ENCODE measurements at regions of chr6 and their contacts with region 1.

Region 1: DNA sequence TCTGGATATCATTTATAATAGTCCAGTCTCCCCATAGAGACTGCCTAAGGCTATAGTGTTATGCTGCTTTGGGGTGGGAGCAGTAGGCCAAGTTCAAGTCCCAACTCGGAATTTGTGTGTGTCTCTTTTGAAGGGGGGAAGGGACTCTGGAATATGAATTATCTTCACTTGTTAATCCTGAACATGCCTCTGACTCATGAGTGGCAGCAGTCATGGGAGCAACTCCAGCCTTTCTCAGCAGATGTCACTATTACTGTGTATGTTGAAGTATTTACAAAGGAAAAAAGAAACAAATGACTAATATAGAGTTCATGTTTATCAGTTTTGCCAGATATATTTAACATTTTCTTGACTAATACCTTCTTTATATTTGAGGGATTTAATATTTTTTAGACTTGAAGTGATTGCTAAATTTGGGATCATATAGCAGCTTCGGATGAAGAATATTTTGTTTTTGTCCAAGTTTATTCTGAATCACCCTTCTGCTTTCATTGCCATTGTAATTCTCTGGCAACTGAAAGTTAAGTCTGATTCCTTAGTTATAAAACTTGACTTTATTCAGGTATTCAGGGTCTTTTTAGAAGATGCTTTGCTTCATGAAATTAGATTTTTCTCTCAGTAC is 23.4 kb downstream of the FAM217A start:
- DNase-seq: peak; percentile 26
- H3K4me3 Mint-ChIP-seq: no peak overlapping the region
- H3K27ac Mint-ChIP-seq: peak overlapping the region; percentile 54
- H3K4me1 Mint-ChIP-seq: peaks cover 34% of the 10 kb centered on the region
- H3K27me3 Mint-ChIP-seq: no peaks in the 10 kb centered on the region

Region 2: DNA sequence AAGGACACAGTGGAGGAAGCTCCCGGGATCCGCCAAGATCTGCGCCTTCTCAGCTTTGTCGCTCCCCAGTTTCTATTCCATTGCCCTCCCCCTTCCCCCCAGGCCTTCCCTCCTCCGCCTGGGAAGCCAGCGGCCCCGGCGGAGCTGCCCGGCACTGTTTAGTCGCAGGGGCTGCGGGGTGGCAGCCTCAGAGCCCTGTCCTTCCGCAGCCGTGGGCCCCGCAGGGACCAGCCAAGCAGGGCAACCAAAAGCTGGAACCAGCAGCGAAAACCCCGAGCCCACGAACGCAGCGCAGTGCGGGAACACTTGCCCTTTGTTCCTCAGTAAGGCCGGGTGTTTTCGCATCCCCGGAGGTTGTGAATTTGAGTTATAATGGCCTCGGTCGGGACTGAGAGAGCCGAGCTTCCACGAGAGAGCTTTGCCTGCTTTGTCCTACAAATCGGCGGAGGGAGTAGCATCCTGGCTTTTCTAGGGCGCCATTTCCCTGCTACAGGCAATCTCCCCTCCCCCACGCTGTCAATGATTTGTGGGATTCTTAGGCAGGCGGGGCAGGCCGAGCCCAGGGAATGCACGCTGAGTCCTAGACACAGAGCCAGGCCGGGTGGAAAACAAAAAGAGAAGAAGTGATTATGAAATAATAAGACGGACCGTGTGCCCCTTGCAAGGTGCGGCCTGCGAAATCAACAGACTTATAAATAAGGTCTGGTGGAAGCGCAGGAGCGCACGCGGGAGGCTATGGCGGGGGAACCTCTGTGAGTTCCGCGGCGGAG is 824.1 kb before region 1 on chr6:
- CTCF ChIA-PET with region 1: no interaction called
- POLR2A ChIA-PET with region 1: no interaction called
- DNase-seq: no peak
- H3K4me3 Mint-ChIP-seq: no peak overlapping the region
- H3K27ac Mint-ChIP-seq: no peak overlapping the region
- H3K4me1 Mint-ChIP-seq: peaks cover 43% of the 10 kb centered on the region
- H3K27me3 Mint-ChIP-seq: peaks cover 86% of the 10 kb centered on the region

Region 3: GRCh38 chr6:3707024-3707423 is 348.5 kb before region 1 on chr6:
- CTCF ChIA-PET with region 1: no interaction called
- POLR2A ChIA-PET with region 1: no interaction called
- DNase-seq: no peak
- H3K4me3 Mint-ChIP-seq: no peak overlapping the region
- H3K27ac Mint-ChIP-seq: no peak overlapping the region
- H3K4me1 Mint-ChIP-seq: no peaks in the 10 kb centered on the region
- H3K27me3 Mint-ChIP-seq: peaks cover 13% of the 10 kb centered on the region

Region 4: DNA sequence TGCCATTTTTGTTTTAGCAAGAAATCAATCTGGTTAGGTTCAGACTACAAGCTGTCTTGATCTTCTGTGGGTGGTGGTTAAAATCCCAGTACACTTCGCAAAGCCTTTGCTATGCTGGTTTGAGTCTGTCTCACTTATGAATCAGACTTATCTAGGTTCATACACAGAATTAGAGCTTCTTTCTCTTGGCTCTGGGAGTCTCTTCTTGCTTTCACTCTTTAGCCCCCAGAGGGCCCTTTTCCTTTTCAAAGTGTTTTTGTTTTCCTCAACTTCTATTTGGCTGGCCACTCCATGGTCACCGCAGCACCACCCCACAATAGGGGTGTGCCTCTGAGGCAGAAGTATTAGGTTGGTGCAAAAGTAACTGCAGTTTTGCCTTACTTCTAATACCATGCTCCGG is 58.6 kb after region 1 on chr6:
- CTCF ChIA-PET with region 1: no interaction called
- POLR2A ChIA-PET with region 1: no interaction called
- DNase-seq: no peak
- H3K4me3 Mint-ChIP-seq: no peak overlapping the region
- H3K27ac Mint-ChIP-seq: no peak overlapping the region
- H3K4me1 Mint-ChIP-seq: no peaks in the 10 kb centered on the region
- H3K27me3 Mint-ChIP-seq: peaks cover 16% of the 10 kb centered on the region

Region 5: DNA sequence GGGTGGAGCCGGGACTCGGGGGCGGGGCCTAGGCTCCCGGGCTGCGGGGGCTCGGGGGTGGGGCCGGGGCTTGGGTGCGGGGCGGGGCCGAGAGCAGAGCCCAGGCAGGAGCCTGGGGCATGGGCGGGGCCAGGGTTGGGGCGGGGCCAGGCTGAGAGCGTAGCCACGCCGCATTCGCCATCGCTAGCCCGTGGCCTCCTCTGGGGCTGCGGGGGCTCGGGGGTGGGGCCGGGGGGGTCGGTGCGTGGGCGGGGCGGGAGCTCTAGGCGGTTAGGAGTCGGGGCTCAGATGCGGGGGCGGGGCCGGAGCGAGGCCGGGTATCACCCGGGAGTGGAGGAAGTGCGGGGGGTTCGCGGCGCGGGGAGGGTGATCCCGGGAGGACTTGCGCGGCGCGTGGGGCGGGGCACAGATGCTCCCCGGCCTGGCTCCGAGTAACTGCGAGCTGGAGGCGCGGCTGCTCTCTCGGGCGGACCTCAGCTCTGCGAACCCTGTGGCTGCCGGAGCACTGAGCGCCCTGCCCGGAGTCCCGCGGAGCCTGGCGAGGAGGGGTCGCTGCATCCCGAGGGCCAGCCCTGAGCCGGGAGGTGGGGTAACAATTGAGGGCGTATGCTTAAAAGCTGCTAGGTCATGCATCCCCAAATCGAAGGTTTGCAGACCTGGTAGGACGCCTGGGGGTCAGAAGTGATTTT is 80.3 kb after region 1 on chr6:
- CTCF ChIA-PET with region 1: interaction called, 20 read pairs
- POLR2A ChIA-PET with region 1: interaction called, 6 read pairs
- DNase-seq: peak; percentile 95
- H3K4me3 Mint-ChIP-seq: peak overlapping the region; percentile 78
- H3K27ac Mint-ChIP-seq: peak overlapping the region; percentile 70
- H3K4me1 Mint-ChIP-seq: peaks cover 36% of the 10 kb centered on the region
- H3K27me3 Mint-ChIP-seq: no peaks in the 10 kb centered on the region

Region 6: GRCh38 chr6:4155848-4156466 is 100.4 kb after region 1 on chr6:
- CTCF ChIA-PET with region 1: interaction called, 23 read pairs
- POLR2A ChIA-PET with region 1: interaction called, 3 read pairs
- DNase-seq: peak; percentile 82
- H3K4me3 Mint-ChIP-seq: no peak overlapping the region
- H3K27ac Mint-ChIP-seq: no peak overlapping the region
- H3K4me1 Mint-ChIP-seq: peaks cover 8% of the 10 kb centered on the region
- H3K27me3 Mint-ChIP-seq: peaks cover 3% of the 10 kb centered on the region

Region 7: DNA sequence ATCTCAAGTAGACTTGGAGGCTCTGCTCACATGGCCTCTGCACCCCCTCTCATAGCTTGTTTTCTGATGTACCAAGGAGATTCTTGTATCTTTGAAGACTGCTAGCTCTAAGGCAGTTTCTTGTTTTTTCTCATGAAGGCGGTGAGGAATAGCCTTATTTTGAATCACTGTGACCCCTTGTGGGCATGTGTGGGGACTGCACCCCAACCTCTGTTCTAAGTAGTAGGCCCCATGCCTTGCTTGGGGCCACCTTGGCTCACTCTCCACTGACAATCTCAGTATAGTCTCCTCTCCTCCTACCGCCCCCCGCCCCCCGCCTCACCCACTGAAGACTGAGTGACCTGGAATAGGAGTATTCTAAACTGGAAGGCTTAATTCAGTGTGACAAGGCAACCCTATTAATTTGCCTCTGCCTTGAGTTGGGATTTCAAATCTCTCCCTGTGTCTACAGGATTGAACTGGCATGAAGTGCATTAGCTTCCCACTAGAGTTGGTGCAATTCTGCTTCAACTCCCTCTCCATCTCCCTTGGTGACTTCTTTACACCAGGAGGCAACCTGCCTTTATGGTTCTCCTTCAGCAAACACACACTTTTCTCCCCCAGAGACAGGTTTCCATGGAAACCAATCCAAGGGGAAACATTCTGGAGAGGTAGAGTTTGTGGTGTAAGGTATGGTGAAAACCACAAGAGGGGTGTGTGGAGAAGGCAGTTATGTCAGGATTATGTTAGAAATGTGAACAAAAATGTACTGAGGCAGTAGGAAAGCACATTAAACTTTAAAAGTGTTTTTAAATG is 155.3 kb after region 1 on chr6:
- CTCF ChIA-PET with region 1: interaction called, 24 read pairs
- POLR2A ChIA-PET with region 1: no interaction called
- DNase-seq: peak; percentile 67
- H3K4me3 Mint-ChIP-seq: no peak overlapping the region
- H3K27ac Mint-ChIP-seq: no peak overlapping the region
- H3K4me1 Mint-ChIP-seq: peaks cover 19% of the 10 kb centered on the region
- H3K27me3 Mint-ChIP-seq: peaks cover 4% of the 10 kb centered on the region